ENCODE measurements at regions of chr20 and their contacts with region 1.

Region 1: DNA sequence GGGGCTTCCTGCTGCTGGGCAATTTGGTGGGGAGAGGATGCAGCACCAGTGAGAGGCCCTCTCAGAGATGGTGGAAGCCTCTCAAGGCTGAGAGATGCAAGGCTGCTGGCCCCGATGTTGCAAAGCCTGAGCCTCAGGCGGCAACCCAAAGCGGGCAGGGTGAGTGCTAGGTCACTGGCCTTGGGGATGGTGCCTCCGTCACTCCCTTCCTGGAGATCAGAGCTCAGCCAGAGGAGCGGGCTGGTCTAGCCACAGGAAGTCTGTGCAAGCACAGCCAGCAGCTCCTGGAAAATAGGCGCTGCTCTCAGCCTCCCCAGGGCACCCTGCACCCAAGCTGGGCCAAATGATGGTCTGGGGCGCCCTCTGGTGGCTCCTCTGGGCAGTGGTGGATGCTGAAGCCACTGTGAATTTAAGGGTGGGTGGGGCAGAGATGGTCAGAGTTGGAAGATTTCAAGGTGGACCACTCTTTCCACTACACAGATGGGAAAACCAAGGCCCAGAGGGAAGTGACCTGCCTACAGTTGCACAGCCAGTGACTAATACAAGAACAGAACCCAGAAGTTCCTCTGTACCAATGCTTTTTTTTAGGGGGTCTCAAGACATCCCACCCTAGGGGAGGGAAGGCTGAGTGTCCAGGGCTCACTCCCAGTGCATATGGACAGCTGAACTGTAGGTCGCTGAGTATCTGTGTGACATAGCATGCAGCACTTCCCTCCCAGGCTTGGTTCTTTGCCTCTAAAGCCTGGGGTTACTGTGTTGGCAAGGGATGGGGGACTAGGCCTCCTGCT is 20.8 kb downstream of the C20orf203 start:
- DNase-seq: peak; percentile 87
- ATAC-seq: peak; percentile 92
- H3K4me3 Mint-ChIP-seq: no peak overlapping the region
- H3K27ac Mint-ChIP-seq: no peak overlapping the region
- H3K4me1 Mint-ChIP-seq: peaks cover 9% of the 10 kb centered on the region; the same call in 1 of the 2 replicates
- H3K27me3 Mint-ChIP-seq: peaks cover 11% of the 10 kb centered on the region
- CTCF ChIP-seq: peak; percentile 97

Region 2: DNA sequence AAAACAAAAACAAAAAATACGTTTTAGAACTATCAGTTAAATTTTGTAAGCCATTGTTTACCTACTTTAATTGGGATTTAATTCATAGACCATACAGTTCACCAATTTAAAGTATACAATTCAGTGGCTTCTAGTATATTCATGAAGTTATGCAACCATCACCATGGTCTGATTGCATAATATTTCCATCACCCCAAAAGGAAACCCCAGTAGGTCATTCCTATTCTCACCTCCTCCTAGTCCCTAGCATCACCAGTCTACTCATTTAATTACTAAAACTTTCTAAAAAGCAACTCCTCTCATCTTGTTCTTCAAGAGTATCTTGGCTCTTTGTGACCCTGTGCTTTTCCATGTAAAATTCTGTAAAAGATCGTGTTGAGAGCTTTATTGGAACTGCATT is 234.6 kb before region 1 on chr20:
- CTCF ChIA-PET with region 1: no interaction called
- POLR2A ChIA-PET with region 1: no interaction called
- DNase-seq: no peak
- ATAC-seq: no peak
- H3K4me3 Mint-ChIP-seq: no peak overlapping the region
- H3K27ac Mint-ChIP-seq: no peak overlapping the region
- H3K4me1 Mint-ChIP-seq: peaks cover 16% of the 10 kb centered on the region
- H3K27me3 Mint-ChIP-seq: no peaks in the 10 kb centered on the region
- CTCF ChIP-seq: no peak

Region 3: GRCh38 chr20:32497589-32498224 is 155.2 kb before region 1 on chr20:
- CTCF ChIA-PET with region 1: interaction called, 12 read pairs
- POLR2A ChIA-PET with region 1: no interaction called
- DNase-seq: no peak
- ATAC-seq: peak; percentile 67
- H3K4me3 Mint-ChIP-seq: no peak overlapping the region
- H3K27ac Mint-ChIP-seq: peak overlapping the region; percentile 30
- H3K4me1 Mint-ChIP-seq: peaks cover 13% of the 10 kb centered on the region
- H3K27me3 Mint-ChIP-seq: no peaks in the 10 kb centered on the region
- CTCF ChIP-seq: no peak

Region 4: DNA sequence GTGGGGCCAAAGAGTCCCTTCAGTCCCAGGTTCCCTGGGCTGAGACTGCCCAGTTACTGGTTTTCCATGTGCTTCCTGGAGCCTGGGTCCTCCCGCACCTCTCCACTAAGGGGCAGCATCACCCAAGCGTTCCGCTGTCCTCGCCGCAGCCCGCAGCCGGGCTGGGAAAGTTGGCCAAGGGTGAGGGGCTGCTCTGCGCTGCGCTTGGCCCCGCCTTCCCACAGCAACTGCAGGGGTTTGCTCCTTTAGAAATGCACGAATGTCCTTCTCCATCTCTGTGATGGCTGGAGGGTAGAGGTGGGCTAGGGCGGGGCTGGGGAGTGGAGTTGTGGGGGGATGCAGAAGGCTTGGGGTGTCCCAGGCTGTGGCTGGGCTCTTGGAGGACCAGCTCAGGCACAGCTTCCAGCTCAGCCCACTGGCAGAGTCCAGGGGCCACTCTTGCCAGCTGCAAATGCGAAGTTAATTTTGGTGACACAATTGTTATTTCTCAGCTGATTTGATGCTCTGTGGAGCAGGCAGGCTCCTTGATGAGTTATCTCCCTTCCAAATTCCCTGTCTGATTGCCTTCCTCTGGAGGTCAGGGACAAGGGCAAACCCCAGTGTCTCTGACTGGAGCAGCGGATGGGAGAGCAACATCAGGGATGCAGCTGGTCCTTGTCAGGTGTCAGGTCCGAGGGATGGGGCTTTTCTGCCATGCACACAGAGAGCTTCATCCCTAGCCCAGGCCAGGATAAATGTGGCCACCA is 131.0 kb before region 1 on chr20:
- CTCF ChIA-PET with region 1: interaction called, 107 read pairs
- POLR2A ChIA-PET with region 1: interaction called, 4 read pairs
- DNase-seq: peak; percentile 92
- ATAC-seq: peak; percentile 95
- H3K4me3 Mint-ChIP-seq: no peak overlapping the region; the same call in 1 of the 2 replicates
- H3K27ac Mint-ChIP-seq: no peak overlapping the region
- H3K4me1 Mint-ChIP-seq: peaks cover 8% of the 10 kb centered on the region
- H3K27me3 Mint-ChIP-seq: no peaks in the 10 kb centered on the region; the same call in 1 of the 2 replicates
- CTCF ChIP-seq: peak; percentile 74

Region 5: DNA sequence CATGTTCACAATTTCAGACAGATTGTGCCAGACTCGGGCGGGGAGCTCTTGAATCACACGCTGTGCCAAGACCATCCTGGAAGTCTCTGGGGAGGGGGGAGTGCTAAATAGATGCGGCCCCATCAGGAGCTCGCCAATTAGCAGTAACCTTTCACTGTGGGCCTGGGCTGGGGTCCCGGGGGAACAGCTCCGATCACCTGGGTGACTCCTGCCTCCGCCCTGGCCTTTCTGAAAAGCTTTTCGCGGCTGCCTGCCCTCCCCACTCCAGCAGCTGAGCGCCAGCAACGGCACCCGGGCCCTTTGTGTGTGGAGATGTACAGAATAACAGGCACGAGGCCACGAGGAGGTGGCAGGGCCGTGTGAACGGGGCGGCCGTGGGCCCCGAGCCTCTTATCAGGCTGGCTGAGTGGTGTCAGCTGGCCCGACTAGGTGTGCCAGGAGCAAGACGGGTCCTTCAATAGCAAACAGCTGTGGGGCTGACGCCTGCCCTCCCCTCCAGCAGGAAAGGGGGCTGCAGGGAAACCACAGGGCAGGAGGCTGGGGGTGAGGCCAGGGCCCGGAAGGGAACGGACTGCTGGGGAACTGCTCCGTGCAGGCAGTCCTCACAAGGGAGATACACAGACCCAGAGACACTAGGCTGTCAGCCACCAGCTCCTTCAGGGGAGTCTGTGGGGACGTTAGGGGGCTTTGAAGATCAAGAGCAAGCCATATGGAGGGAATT is 124.6 kb before region 1 on chr20:
- CTCF ChIA-PET with region 1: interaction called, 107 read pairs
- POLR2A ChIA-PET with region 1: no interaction called
- DNase-seq: no peak
- ATAC-seq: peak; percentile 50
- H3K4me3 Mint-ChIP-seq: no peak overlapping the region
- H3K27ac Mint-ChIP-seq: no peak overlapping the region
- H3K4me1 Mint-ChIP-seq: 0 out of 2 replicates have a peak, but pooled peaks cover 4% of the 10 kb centered on the region
- H3K27me3 Mint-ChIP-seq: no peaks in the 10 kb centered on the region; the same call in 1 of the 2 replicates
- CTCF ChIP-seq: no peak

Region 6: GRCh38 chr20:32638848-32639247 is 14.1 kb before region 1 on chr20:
- CTCF ChIA-PET with region 1: interaction called, 12 read pairs
- POLR2A ChIA-PET with region 1: no interaction called
- DNase-seq: no peak
- ATAC-seq: peak; percentile 65
- H3K4me3 Mint-ChIP-seq: no peak overlapping the region
- H3K27ac Mint-ChIP-seq: no peak overlapping the region
- H3K4me1 Mint-ChIP-seq: peaks cover 7% of the 10 kb centered on the region
- H3K27me3 Mint-ChIP-seq: peaks cover under 1% of the 10 kb centered on the region; the same call in 1 of the 2 replicates
- CTCF ChIP-seq: no peak

Region 7: GRCh38 chr20:32664678-32665159 is 11.8 kb after region 1 on chr20:
- CTCF ChIA-PET with region 1: interaction called, 27 read pairs
- POLR2A ChIA-PET with region 1: no interaction called
- DNase-seq: no peak
- ATAC-seq: no peak
- H3K4me3 Mint-ChIP-seq: no peak overlapping the region
- H3K27ac Mint-ChIP-seq: no peak overlapping the region
- H3K4me1 Mint-ChIP-seq: peaks cover 9% of the 10 kb centered on the region
- H3K27me3 Mint-ChIP-seq: no peaks in the 10 kb centered on the region
- CTCF ChIP-seq: no peak